AG04449 (cell line): ENCODE measurements at regions of chr22 and their contacts with region 1.

Region 1: DNA sequence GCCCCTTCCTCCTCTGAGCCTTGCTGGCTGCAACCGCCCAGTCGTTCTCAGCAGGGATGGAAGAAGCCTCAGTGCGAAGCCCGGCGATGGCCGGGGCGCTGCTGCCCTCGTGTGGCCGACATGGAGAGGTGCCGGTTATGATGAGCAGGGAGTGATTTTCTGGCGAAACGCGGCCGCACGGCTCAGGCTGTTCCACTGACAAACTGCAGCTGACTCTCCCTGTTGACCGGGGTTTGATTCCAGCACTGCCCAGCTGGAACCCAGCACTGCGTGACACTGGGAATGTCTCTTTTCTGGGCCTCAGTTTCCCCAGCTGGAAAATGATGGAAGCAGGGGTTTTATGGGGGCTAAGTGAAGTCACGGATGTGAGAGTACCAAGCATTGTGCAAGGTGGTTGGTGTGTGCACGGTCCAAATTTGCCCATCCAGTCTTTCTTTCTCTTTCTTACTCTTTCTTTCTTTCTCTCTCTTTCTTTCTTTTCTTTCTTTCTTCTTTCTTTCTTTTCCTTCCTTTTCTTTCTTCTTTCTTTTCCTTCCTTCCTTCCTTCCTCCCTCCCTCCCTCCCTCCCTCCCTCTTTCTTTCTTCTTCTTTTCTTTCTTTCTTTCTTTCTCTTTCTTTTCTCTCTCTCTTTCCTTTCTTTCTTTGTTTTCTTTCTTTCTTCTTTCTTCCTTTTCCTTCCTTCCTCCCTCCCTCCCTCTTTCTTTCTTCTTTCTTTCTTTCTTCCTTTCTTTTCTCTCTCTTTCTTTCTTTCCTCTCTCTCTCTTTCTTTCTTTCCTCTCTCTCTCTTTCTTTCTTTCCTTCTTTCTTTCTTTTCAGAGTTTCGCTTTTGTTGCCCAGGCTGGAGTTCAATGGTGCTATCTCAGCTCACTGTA is 25.8 kb upstream of the MPPED1 start:
- DNase-seq: peak; percentile 16
- H3K4me3 ChIP-seq: no peak overlapping the region
- CTCF ChIP-seq: peak; percentile 96

Region 2: GRCh38 chr22:43230971-43231723 is 154.9 kb before region 1 on chr22:
- CTCF ChIA-PET with region 1: interaction called, 132 read pairs
- POLR2A ChIA-PET with region 1: no interaction called
- DNase-seq: no peak
- H3K4me3 ChIP-seq: no peak overlapping the region
- CTCF ChIP-seq: peak; percentile 92

Region 3: DNA sequence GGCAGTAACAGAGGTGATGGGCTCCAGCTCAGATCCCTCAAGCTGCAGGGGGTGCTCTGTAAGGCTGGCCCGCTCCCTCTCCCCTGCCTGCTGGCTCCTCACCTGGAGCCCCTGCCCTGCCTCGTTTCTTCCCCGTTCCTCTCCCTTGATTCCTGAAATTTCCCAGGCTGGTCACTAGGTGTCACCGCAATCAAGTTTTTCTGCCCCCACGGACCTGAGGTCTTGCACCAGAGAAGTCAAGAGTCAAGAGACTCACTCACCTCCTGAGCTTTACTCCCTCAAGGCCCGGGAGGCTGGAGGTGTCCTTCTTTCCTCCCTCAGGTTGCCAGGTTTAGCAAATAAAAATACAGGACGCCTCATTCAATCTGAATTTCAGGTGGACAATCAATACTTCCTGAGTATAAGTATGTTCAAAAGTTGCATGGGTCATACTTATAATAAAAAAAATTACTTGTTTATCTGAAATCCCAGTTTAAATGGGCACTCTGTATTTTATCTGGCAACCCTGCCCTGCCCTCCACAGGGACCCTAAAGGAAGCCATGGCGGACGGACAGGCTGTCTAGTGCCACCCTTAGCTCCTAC is 112.0 kb before region 1 on chr22:
- CTCF ChIA-PET with region 1: interaction called, 59 read pairs
- POLR2A ChIA-PET with region 1: no interaction called
- DNase-seq: no peak
- H3K4me3 ChIP-seq: no peak overlapping the region
- CTCF ChIP-seq: peak; percentile 67

Region 4: DNA sequence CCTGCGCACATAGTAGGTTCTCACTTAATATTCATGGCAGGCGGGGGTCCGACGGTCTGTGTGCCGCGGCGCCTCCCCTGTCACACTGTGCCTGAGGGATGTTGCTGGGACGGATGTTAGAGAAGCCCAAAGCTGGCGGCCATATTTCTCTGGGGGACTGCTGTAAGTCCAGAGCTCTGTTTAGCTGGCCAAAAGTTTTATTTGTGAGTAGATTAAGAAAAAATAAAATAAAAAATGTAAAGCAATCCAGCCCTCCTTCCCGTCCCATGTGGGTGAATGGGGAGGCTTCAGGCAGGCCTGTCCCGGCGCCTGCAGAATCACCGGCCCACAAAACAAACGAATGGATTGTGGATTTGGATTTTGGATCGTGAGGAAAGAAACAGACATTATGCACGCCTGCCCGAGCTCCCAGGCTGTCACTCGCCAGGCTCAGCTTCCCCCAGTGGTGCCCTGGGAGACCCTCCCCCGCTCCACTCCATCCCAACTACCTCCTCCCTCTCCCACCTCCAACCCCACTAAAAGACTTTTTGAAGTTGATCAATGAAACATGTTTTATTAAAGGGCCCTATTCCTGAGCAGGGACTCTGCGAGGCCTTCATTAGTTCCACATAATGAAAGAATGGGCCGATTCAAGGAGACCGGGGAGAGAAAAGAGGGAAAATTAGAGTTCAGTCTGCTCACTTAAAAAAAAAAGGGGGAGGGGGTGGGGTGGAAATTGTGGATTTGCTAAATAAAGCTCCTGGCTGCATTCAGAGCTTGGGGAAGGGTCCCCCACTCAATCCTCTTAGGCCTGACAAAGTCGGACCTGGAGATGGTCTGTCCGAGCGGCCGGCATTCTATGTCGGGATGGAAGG is 22.5 kb before region 1 on chr22:
- CTCF ChIA-PET with region 1: interaction called, 11 read pairs
- POLR2A ChIA-PET with region 1: no interaction called
- DNase-seq: no peak
- H3K4me3 ChIP-seq: no peak overlapping the region
- CTCF ChIP-seq: no peak

Region 5: GRCh38 chr22:43399338-43399979 is 13.5 kb after region 1 on chr22:
- CTCF ChIA-PET with region 1: interaction called, 11 read pairs
- POLR2A ChIA-PET with region 1: no interaction called
- DNase-seq: no peak
- H3K4me3 ChIP-seq: no peak overlapping the region
- CTCF ChIP-seq: no peak

Region 6: GRCh38 chr22:43826142-43827002 is 440.4 kb after region 1 on chr22:
- CTCF ChIA-PET with region 1: interaction called, 27 read pairs
- POLR2A ChIA-PET with region 1: no interaction called
- DNase-seq: peak; percentile 33
- H3K4me3 ChIP-seq: peak overlapping the region; percentile 35
- CTCF ChIP-seq: peak; percentile 26

Region 7: DNA sequence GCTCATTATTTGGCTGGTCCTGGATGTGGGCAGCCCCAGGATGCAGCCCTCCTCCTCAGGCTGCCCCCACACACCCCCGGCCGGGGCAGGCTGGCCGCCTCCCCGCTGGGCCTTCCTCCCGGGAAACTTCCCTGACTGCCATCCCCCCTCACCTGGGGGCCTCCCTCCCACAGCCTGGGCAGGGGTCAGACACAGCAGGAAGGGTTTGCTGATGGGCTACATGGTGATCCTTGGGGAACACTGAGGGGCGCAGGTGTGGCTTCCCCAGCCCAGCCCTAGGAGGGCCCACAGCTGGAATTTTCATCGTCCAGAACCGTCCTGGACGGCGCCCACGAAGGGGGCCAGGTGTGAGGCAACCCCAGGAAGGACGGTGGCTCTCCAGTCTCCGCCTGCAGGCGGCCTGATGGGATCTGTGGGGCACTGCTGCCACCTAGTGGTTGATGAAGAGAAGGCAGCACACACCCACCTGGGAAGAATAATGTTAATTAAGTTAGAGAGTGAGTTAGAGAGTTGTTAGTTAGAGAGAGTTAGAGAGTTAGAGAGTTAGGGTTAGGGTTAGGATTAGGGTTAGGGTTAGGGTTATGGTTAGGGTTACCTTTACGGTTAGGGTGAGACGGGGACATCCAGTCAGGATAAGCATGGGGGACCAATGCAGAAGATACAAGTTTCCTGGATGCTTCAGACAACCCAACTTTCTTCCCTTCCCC is 1240.1 kb after region 1 on chr22:
- CTCF ChIA-PET with region 1: interaction called, 21 read pairs
- POLR2A ChIA-PET with region 1: no interaction called
- DNase-seq: no peak
- H3K4me3 ChIP-seq: no peak overlapping the region
- CTCF ChIP-seq: peak; percentile 89